Posterior vena cava (tissue), 2 donors: ENCODE measurements at regions of chr4 and their contacts with region 1.

Region 1: DNA sequence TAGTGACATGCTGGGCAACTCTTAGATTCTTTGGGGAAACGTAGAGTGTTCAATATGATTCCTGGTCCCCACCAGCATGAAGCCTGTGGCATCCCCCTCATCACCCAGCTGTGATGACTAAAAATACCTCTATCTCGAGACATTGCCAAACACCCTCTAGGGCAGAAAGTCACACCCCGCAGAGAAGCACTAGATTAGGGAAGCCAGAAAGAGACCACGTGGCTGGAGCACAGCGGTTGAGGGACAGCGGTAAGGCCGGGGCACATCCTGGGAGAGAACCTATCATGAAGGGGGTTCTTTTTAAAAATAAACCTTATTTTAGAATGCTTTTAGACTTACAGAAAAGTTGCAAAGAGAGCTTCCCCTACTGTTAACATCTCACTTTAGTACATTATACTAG is 11.0 kb downstream of the FAT1 start:
- DNase-seq: no peak

Region 2: GRCh38 chr4:185549095-185549629 is 1163.5 kb before region 1 on chr4:
- intact Hi-C with region 1: loop called in 1 of 2 experiments (anchors 5 kb)
- DNase-seq: no peak

Region 3: DNA sequence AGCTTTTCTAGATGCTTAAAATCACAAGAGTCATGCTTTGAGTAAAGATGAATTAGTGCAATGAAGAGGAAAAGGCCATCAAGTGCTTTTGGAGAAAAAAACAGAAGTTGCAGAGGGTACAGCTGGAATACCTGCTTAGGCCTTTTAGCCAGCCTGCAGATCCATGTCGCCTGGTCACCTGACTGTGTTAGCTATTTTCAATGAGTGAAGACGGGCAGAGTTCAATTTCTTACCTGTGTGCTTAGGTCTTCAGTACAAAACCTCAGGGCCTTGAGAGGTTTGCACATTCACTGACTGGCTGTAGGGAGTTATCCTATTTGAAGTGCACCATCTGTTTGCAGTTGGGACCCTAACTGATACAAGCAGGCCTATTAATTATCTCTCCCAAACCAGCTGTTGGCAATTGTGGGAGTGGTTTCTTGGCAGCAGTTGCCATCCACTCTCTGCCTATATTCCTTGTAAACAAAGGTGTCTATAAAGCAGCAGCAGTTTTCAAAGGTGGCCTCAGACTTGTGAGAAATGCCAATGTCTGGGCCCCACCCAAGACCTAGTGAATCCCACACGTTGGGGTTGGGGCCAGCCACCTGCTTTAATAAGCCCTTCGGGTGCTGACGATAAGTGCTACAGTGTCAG is 27.2 kb after region 1 on chr4:
- intact Hi-C with region 1: no loop called
- DNase-seq: no peak